ENCODE measurements at regions of chr1 and their contacts with region 1.

Region 1: GRCh38 chr1:156338180-156338973 is at the starts of genes CCT3 and TSACC:
- DNase-seq: peak; percentile 97 to 100 (median 99)
- ATAC-seq: peak; percentile 95
- H3K4me3 ChIP-seq: peak within 1 kb of the TSS; percentile 69 to 85
- H3K4me3 Mint-ChIP-seq: peak within 1 kb of the TSS; percentile 95
- H3K27ac ChIP-seq: peak within 1 kb of the TSS; percentile 61 to 92
- H3K27ac Mint-ChIP-seq: peak within 1 kb of the TSS; percentile 95
- H3K4me1 ChIP-seq: peaks cover 25% of the 10 kb centered on the region
- H3K4me1 Mint-ChIP-seq: peaks cover 39% of the 10 kb centered on the region
- H3K27me3 ChIP-seq: no peaks in the 10 kb centered on the region
- H3K27me3 Mint-ChIP-seq: no peaks in the 10 kb centered on the region
- CTCF ChIP-seq: no peak
- total RNA-seq, gene CCT3: 49.2 to 53.4 TPM
- total RNA-seq, gene TSACC: 0.46 TPM in 1 of 2 experiments, not detected in the other

Region 2: DNA sequence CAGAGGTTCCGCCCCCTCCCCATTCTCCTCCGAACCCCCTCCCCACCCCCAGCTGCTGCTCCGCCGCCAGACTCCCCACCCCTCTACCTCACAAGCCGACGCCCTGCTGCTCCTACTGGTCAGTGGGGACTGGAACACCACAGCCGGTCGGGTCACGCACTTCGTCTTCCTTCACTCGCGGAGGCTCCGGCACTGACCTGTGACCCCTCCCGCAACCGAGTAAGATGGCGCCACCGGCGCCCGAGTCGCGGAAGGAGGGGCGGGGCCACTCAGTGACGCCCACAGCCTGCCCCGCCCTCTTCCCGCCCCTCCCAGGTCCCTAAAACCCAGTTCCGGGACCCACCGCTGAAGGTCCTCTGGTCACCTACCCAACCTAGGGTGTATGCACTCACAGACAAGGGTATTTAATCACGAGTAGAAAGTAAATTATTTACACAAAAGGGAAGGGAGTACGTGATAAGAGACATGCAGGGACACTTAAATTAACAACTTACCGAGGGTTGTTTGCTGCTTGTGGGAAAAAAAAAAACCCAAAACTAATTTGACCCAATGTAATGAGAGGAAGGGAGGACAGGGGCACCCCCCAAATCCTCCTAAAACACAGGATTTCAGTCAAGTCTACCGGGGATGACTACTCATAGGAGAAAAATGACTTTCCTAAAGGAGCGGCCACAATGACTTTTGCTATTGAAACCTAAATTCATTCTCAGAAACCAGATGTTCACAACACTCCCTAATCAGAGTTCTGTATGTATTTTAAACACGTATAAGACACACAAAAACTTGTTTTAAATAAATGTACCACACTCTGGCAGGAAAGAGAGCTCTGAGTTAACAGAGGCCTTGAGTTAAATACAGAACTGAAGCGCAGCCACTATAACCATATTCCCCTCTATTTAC is 427.0 kb before region 1 on chr1 and contains the start of gene RIT1:
- CTCF ChIA-PET with region 1: no interaction called
- POLR2A ChIA-PET with region 1: no interaction called
- intact Hi-C with region 1: loop called in 1 of 2 experiments (anchors 5 kb)
- DNase-seq: peak; percentile 62 to 93 (median 85)
- ATAC-seq: peak; percentile 97
- H3K4me3 ChIP-seq: peak within 1 kb of the TSS; percentile 68 to 72
- H3K4me3 Mint-ChIP-seq: peak within 1 kb of the TSS; percentile 97
- H3K27ac ChIP-seq: peak within 1 kb of the TSS; percentile 71 to 73
- H3K27ac Mint-ChIP-seq: peak within 1 kb of the TSS; percentile 98
- H3K4me1 ChIP-seq: peaks cover 21% of the 10 kb centered on the region
- H3K4me1 Mint-ChIP-seq: peaks cover 27% of the 10 kb centered on the region
- H3K27me3 ChIP-seq: no peaks in the 10 kb centered on the region
- H3K27me3 Mint-ChIP-seq: no peaks in the 10 kb centered on the region
- CTCF ChIP-seq: no peak
- total RNA-seq, gene RIT1: 79.6 to 85.0 TPM

Region 3: GRCh38 chr1:156295391-156295947 is 42.9 kb before region 1 on chr1 and contains the start of gene GLMP:
- CTCF ChIA-PET with region 1: no interaction called
- POLR2A ChIA-PET with region 1: no interaction called
- intact Hi-C with region 1: loop called in 1 of 2 experiments (anchors 1 kb)
- DNase-seq: peak; percentile 20 to 77 (median 63)
- ATAC-seq: peak; percentile 89
- H3K4me3 ChIP-seq: peak within 1 kb of the TSS; percentile 67 to 87
- H3K4me3 Mint-ChIP-seq: peak within 1 kb of the TSS; percentile 87
- H3K27ac ChIP-seq: peak within 1 kb of the TSS; percentile 55 to 58
- H3K27ac Mint-ChIP-seq: peak within 1 kb of the TSS; percentile 75
- H3K4me1 ChIP-seq: peaks cover 17% of the 10 kb centered on the region
- H3K4me1 Mint-ChIP-seq: peaks cover 18% of the 10 kb centered on the region
- H3K27me3 ChIP-seq: no peaks in the 10 kb centered on the region
- H3K27me3 Mint-ChIP-seq: no peaks in the 10 kb centered on the region
- CTCF ChIP-seq: no peak
- total RNA-seq, gene GLMP: 10.8 to 10.9 TPM

Region 4: GRCh38 chr1:156407344-156407743 is 69.0 kb after region 1 on chr1:
- CTCF ChIA-PET with region 1: no interaction called
- POLR2A ChIA-PET with region 1: no interaction called
- intact Hi-C with region 1: no loop called
- DNase-seq: no peak
- ATAC-seq: no peak
- H3K4me3 ChIP-seq: no peak overlapping the region
- H3K4me3 Mint-ChIP-seq: no peak overlapping the region
- H3K27ac ChIP-seq: no peak overlapping the region
- H3K27ac Mint-ChIP-seq: no peak overlapping the region
- H3K4me1 ChIP-seq: no peaks in the 10 kb centered on the region
- H3K4me1 Mint-ChIP-seq: no peaks in the 10 kb centered on the region
- H3K27me3 ChIP-seq: peaks cover 0 to 3% of the 10 kb centered on the region in 2 experiments
- H3K27me3 Mint-ChIP-seq: peaks cover 53% of the 10 kb centered on the region
- CTCF ChIP-seq: no peak

Region 5: GRCh38 chr1:156625436-156626078 is 287.2 kb after region 1 on chr1:
- CTCF ChIA-PET with region 1: no interaction called
- POLR2A ChIA-PET with region 1: no interaction called
- intact Hi-C with region 1: no loop called
- DNase-seq: peak; percentile 37 to 82 (median 70)
- ATAC-seq: peak; percentile 77
- H3K4me3 ChIP-seq: peak overlapping the region; percentile 26 to 46
- H3K4me3 Mint-ChIP-seq: peak overlapping the region; percentile 75
- H3K27ac ChIP-seq: no peak overlapping the region
- H3K27ac Mint-ChIP-seq: no peak overlapping the region
- H3K4me1 ChIP-seq: peaks cover 23% of the 10 kb centered on the region
- H3K4me1 Mint-ChIP-seq: peaks cover 14% of the 10 kb centered on the region
- H3K27me3 ChIP-seq: peaks cover 26 to 33% of the 10 kb centered on the region in 2 experiments
- H3K27me3 Mint-ChIP-seq: peaks cover 53% of the 10 kb centered on the region
- CTCF ChIP-seq: peak; percentile 83

Region 6: DNA sequence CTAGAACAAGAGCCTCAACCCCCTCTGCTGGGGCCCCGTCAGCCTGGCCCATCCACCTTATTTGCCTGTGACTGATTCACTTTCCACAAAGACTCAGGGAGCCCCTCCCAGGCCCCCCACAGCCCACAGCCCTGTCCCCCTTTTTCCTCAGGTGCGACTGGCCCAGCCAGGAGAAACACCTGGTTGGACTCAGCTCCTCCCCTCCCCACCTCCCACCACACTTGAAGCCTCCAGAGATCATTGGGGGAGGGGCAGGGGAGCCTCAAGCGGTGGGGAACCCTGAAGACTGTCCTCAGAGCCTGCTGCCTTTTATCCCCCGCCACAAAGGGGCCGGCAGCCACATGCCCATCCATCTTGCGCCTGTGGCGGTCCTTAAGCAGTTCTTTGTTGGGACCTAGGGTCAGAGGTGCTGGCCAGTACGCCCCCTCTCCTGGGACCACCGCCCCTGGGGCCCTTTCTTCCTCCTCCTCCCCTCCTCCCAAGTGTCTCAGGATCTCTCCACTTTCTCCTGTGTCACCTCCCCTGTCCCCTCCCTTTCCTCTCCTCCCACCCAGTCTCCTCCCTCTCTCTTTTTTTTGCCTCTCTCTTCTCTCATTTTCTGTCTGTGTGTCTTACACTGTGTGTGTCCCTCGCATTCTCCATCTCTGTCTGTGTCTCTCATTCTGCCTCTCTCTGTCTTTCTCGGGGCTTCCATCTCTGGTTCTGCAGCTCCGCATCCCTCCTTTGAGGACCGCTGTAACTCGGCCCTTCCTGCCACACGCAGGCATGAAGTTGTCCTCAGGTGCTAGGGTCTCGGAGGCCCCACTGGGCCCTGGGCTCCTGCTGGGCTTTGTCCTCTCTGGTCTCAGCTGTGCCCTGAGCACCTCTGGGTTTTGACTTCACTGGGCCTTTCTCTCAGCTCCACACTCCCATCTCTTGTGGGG is 354.8 kb after region 1 on chr1:
- CTCF ChIA-PET with region 1: no interaction called
- POLR2A ChIA-PET with region 1: no interaction called
- intact Hi-C with region 1: no loop called
- DNase-seq: peak in 3 of 9 experiments; percentile 37 to 53 (median 48)
- ATAC-seq: no peak
- H3K4me3 ChIP-seq: no peak overlapping the region
- H3K4me3 Mint-ChIP-seq: no peak overlapping the region
- H3K27ac ChIP-seq: no peak overlapping the region
- H3K27ac Mint-ChIP-seq: no peak overlapping the region
- H3K4me1 ChIP-seq: peaks cover 16% of the 10 kb centered on the region
- H3K4me1 Mint-ChIP-seq: peaks cover 22% of the 10 kb centered on the region
- H3K27me3 ChIP-seq: peaks cover 19 to 21% of the 10 kb centered on the region in 2 experiments
- H3K27me3 Mint-ChIP-seq: peaks cover 62% of the 10 kb centered on the region
- CTCF ChIP-seq: no peak

Region 7: GRCh38 chr1:156751758-156752757 is 413.7 kb after region 1 on chr1:
- CTCF ChIA-PET with region 1: no interaction called
- POLR2A ChIA-PET with region 1: no interaction called
- intact Hi-C with region 1: loop called in 1 of 2 experiments (anchors 5 kb)
- DNase-seq: peak; percentile 94 to 98 (median 97)
- ATAC-seq: peak; percentile 85
- H3K4me3 ChIP-seq: peak overlapping the region; percentile 89 to 92
- H3K4me3 Mint-ChIP-seq: peak overlapping the region; percentile 89
- H3K27ac ChIP-seq: peak overlapping the region; percentile 65 to 89
- H3K27ac Mint-ChIP-seq: peak overlapping the region; percentile 90
- H3K4me1 ChIP-seq: peaks cover 48% of the 10 kb centered on the region
- H3K4me1 Mint-ChIP-seq: peaks cover 57% of the 10 kb centered on the region
- H3K27me3 ChIP-seq: no peaks in the 10 kb centered on the region
- H3K27me3 Mint-ChIP-seq: no peaks in the 10 kb centered on the region
- CTCF ChIP-seq: no peak

Measured in CD8-positive, alpha-beta T cell (primary cell).